Transverse colon (tissue), 4 donors: ENCODE measurements at regions of chr10 and their contacts with region 1.

Region 1: GRCh38 chr10:31618541-31619291 is 299.7 kb downstream of the ZEB1 start:
- DNase-seq: no peak
- H3K4me3 ChIP-seq: no peak overlapping the region
- H3K27ac ChIP-seq: peak overlapping the region in 3 of 4 donors; percentile 3 to 21 (median 12)
- H3K4me1 ChIP-seq: peaks cover 5 to 29% (median 12%) of the 10 kb centered on the region in 4 donors
- H3K27me3 ChIP-seq: no peaks in the 10 kb centered on the region
- CTCF ChIP-seq: no peak
- EP300 ChIP-seq: no peak
- POLR2A ChIP-seq: no peak

Region 2: GRCh38 chr10:31642281-31642680 is 23.6 kb after region 1 on chr10:
- in situ Hi-C with region 1: no loop called
- intact Hi-C with region 1: loop called (anchors 1 kb)
- DNase-seq: no peak
- H3K4me3 ChIP-seq: no peak overlapping the region
- H3K27ac ChIP-seq: no peak overlapping the region
- H3K4me1 ChIP-seq: no peaks in the 10 kb centered on the region
- H3K27me3 ChIP-seq: no peaks in the 10 kb centered on the region
- CTCF ChIP-seq: no peak
- EP300 ChIP-seq: no peak
- POLR2A ChIP-seq: no peak

Region 3: GRCh38 chr10:31669357-31669756 is 50.6 kb after region 1 on chr10:
- in situ Hi-C with region 1: no loop called
- intact Hi-C with region 1: loop called (anchors 10 kb)
- DNase-seq: no peak
- H3K4me3 ChIP-seq: no peak overlapping the region
- H3K27ac ChIP-seq: peak overlapping the region in 2 of 4 donors; percentile 19 to 56
- H3K4me1 ChIP-seq: peaks cover 0 to 4% (median 0%) of the 10 kb centered on the region in 4 donors
- H3K27me3 ChIP-seq: no peaks in the 10 kb centered on the region
- CTCF ChIP-seq: no peak
- EP300 ChIP-seq: no peak
- POLR2A ChIP-seq: no peak